Naive thymus-derived CD4-positive, alpha-beta T cell (primary cell): ENCODE measurements at regions of chr14 and their contacts with region 1.

Region 1: GRCh38 chr14:99415496-99416281 is 65.0 kb downstream of the SETD3 start:
- DNase-seq: peak in 8 of 9 donors; percentile 49 to 81 (median 75)
- ATAC-seq: peak; percentile 98
- H3K4me3 ChIP-seq: no peak overlapping the region
- H3K4me3 Mint-ChIP-seq: no peak overlapping the region
- H3K27ac ChIP-seq: no peak overlapping the region
- H3K27ac Mint-ChIP-seq: peak overlapping the region in 3 of 9 donors; percentile 56 to 73 (median 73)
- H3K4me1 ChIP-seq: peaks cover 0 to 4% of the 10 kb centered on the region in 2 donors
- H3K4me1 Mint-ChIP-seq: peaks cover 2 to 19% (median 6%) of the 10 kb centered on the region in 7 donors
- H3K27me3 ChIP-seq: no peaks in the 10 kb centered on the region
- H3K27me3 Mint-ChIP-seq: no peaks in the 10 kb centered on the region

Region 2: DNA sequence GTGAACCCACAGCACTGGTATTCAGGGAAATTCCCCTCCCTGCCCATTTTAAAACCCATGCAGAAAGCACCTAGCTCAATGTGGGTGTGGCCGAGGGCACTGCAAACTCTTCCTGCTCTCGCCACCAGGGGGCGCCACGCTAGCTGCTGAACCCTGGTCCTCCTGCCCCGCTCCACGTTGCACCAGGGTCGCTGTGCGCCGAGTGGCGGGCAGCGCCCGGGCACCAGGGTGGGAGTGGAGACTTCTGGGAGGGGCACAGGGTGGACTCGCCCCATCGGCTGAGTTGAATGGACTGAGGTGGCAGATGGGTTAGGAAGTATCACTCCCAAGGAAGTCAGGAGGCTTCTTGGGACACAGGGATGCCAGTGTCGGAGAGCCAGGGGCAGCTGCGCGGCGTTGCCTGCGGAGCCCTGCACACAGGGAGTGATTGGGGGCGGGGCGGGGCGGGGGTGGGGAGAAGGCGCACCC is 95.5 kb before region 1 on chr14:
- CTCF ChIA-PET with region 1: interaction called, 8 read pairs
- POLR2A ChIA-PET with region 1: no interaction called
- intact Hi-C with region 1: loop called (anchors 1 kb)
- DNase-seq: peak; percentile 33 to 80 (median 56)
- ATAC-seq: peak; percentile 81
- H3K4me3 ChIP-seq: no peak overlapping the region
- H3K4me3 Mint-ChIP-seq: peak overlapping the region in 2 of 10 donors; percentile 53 to 54
- H3K27ac ChIP-seq: no peak overlapping the region
- H3K27ac Mint-ChIP-seq: no peak overlapping the region
- H3K4me1 ChIP-seq: no peaks in the 10 kb centered on the region
- H3K4me1 Mint-ChIP-seq: peaks cover 0 to 10% (median 3%) of the 10 kb centered on the region in 7 donors
- H3K27me3 ChIP-seq: no peaks in the 10 kb centered on the region
- H3K27me3 Mint-ChIP-seq: peaks cover 0 to under 1% (median 0%) of the 10 kb centered on the region in 5 donors

Region 3: DNA sequence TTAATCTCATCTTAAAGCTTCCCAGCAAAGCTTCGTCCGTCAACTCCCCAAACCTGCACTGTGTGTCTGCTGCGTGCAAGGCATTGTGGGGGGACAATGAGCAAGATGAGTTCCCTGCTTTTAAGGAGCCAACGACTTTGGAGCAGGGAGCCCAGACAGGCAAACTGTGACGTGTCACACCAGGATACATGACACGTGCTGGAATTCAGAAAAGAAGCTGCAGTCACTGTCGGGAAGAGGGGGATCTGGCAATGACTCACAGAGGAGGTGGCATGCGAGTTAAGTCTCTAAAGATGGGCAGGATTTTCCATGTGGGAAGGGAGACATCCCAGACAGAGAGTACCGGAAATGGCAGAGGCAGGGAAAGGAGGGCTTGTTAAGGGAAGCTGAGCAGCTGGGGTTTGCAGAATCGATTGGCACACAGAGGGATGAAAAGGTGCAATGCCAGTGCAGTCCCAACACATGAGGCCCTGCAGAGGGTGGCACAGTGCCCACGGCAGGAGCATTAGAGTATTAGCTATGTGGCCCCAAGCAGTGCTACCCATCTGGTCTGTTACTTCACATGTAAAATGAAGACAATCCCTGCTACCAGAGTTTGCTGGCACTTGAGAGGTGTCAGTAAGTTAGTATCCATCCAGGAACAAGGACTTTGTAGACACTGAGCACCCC is 12.1 kb after region 1 on chr14:
- CTCF ChIA-PET with region 1: interaction called, 18 read pairs
- POLR2A ChIA-PET with region 1: no interaction called
- intact Hi-C with region 1: no loop called
- DNase-seq: no peak
- ATAC-seq: no peak
- H3K4me3 ChIP-seq: no peak overlapping the region
- H3K4me3 Mint-ChIP-seq: no peak overlapping the region
- H3K27ac ChIP-seq: no peak overlapping the region
- H3K27ac Mint-ChIP-seq: peak overlapping the region in 2 of 9 donors; percentile 22 to 69
- H3K4me1 ChIP-seq: peaks cover 0 to 8% of the 10 kb centered on the region in 2 donors
- H3K4me1 Mint-ChIP-seq: peaks cover 5 to 43% (median 26%) of the 10 kb centered on the region in 7 donors
- H3K27me3 ChIP-seq: no peaks in the 10 kb centered on the region
- H3K27me3 Mint-ChIP-seq: no peaks in the 10 kb centered on the region